ENCODE measurements at regions of chr1 and their contacts with region 1.

Region 1: GRCh38 chr1:116567790-116568661 is 2.8 kb downstream of the CD58 start:
- DNase-seq: no peak
- ATAC-seq: no peak
- H3K4me3 ChIP-seq: no peak overlapping the region
- H3K4me3 Mint-ChIP-seq: peak overlapping the region; percentile 85 to 95 (median 91)
- H3K27ac ChIP-seq: peak overlapping the region; percentile 4
- H3K27ac Mint-ChIP-seq: peak overlapping the region; percentile 87 to 93
- H3K4me1 ChIP-seq: peaks cover 0 to 38% of the 10 kb centered on the region in 2 experiments
- H3K4me1 Mint-ChIP-seq: peaks cover 41 to 68% (median 57%) of the 10 kb centered on the region in 3 donors
- H3K27me3 ChIP-seq: no peaks in the 10 kb centered on the region
- H3K27me3 Mint-ChIP-seq: no peaks in the 10 kb centered on the region

Region 2: DNA sequence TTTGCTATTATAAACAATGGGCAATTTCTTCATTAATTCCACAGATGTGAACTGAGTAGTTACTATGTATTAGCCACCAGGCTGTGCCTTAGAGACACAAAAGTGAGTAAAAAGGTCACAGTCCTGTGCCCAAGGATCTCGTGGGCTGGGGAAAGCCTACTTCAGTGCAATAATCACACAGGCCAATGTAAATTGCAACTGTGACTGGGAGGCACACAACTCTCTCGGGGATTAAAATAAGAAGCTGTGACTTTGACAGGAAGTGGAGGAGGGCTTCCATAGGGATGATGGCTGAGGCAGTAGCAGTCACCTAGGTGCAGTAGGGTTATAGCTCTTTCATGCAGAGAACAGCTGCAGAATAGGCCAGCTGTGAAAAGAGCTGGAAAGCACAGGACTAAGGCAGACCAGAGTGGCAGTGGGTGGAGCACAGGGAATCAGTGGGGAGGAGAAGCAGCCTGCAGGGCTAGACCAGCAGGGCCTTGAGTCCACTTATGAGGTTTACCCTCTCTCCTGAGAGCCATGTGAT is 335.0 kb before region 1 on chr1:
- CTCF ChIA-PET with region 1: no interaction called
- POLR2A ChIA-PET with region 1: no interaction called
- DNase-seq: peak in 30 of 35 experiments; percentile 5 to 63 (median 16)
- ATAC-seq: peak; percentile 82 to 94 (median 92)
- H3K4me3 ChIP-seq: no peak overlapping the region
- H3K4me3 Mint-ChIP-seq: peak overlapping the region in 1 of 3 donors; percentile 19
- H3K27ac ChIP-seq: no peak overlapping the region
- H3K27ac Mint-ChIP-seq: peak overlapping the region; percentile 50 to 78
- H3K4me1 ChIP-seq: peaks cover 2 to 11% of the 10 kb centered on the region in 2 experiments
- H3K4me1 Mint-ChIP-seq: peaks cover 16 to 23% (median 20%) of the 10 kb centered on the region in 3 donors
- H3K27me3 ChIP-seq: no peaks in the 10 kb centered on the region
- H3K27me3 Mint-ChIP-seq: no peaks in the 10 kb centered on the region

Region 3: DNA sequence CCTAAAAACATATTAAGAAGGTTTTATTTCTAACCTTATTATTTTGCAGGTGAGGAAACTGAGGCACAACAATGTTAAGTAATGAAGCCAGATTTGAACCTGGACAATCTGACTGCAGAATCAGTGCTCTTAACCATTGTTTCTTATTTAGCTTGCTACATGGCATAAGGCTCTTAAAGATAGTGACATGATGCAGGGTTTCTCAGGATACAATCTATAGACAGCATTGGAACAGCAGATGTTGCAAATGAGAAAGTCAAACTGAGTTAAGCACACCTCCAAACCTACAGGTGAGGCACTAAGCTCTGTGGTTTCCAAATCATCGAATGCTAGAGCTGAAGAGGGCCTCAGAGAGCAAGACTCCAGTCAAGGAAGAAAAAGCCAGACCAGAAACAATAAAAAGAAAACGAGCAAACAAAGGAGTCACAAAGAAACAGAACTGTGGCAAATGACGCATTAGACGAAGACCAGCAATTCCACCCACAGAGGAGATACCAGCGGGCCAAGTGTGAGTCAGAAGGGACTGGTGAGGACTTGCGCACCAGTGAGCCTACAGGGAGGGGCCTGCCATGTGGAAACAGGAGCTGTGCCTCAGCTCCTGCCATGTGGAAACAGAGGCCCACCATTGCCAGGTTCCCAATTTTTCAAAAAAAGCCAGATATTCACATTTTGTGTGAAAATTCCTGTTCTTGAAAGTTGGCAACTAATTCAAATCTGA is 11.6 kb before region 1 on chr1:
- CTCF ChIA-PET with region 1: interaction called, 4 to 15 read pairs
- POLR2A ChIA-PET with region 1: interaction called in 1 of 2 experiments, 15 read pairs
- DNase-seq: peak; percentile 19 to 81 (median 52)
- ATAC-seq: peak; percentile 79 to 97 (median 88)
- H3K4me3 ChIP-seq: no peak overlapping the region
- H3K4me3 Mint-ChIP-seq: peak overlapping the region in 1 of 3 donors; percentile 2
- H3K27ac ChIP-seq: peak overlapping the region; percentile 87
- H3K27ac Mint-ChIP-seq: peak overlapping the region; percentile 81 to 91
- H3K4me1 ChIP-seq: peaks cover 0 to 40% of the 10 kb centered on the region in 2 experiments
- H3K4me1 Mint-ChIP-seq: peaks cover 31 to 77% (median 64%) of the 10 kb centered on the region in 3 donors
- H3K27me3 ChIP-seq: no peaks in the 10 kb centered on the region
- H3K27me3 Mint-ChIP-seq: peaks cover 0 to 4% of the 10 kb centered on the region in 2 donors

Region 4: GRCh38 chr1:116962987-116963639 is 395.1 kb after region 1 on chr1:
- CTCF ChIA-PET with region 1: no interaction called
- POLR2A ChIA-PET with region 1: no interaction called
- DNase-seq: peak in 2 of 35 experiments; percentile 9 to 23
- ATAC-seq: peak; percentile 27 to 70 (median 51)
- H3K4me3 ChIP-seq: no peak overlapping the region
- H3K4me3 Mint-ChIP-seq: no peak overlapping the region
- H3K27ac ChIP-seq: no peak overlapping the region
- H3K27ac Mint-ChIP-seq: no peak overlapping the region
- H3K4me1 ChIP-seq: peaks cover 9 to 11% of the 10 kb centered on the region in 2 experiments
- H3K4me1 Mint-ChIP-seq: peaks cover 0 to 3% (median 0%) of the 10 kb centered on the region in 3 donors
- H3K27me3 ChIP-seq: no peaks in the 10 kb centered on the region
- H3K27me3 Mint-ChIP-seq: no peaks in the 10 kb centered on the region